PC-9 (cell line): ENCODE measurements at regions of chr20 and their contacts with region 1.

Region 1: GRCh38 chr20:1005452-1006027 is 3.4 kb upstream of the RSPO4 start:
- DNase-seq: peak in 1 of 2 experiments; percentile 15
- H3K4me3 ChIP-seq: no peak overlapping the region
- H3K27ac ChIP-seq: no peak overlapping the region
- H3K4me1 ChIP-seq: no peaks in the 10 kb centered on the region
- H3K27me3 ChIP-seq: peaks cover 40% of the 10 kb centered on the region; the same call in 1 of the 2 replicates
- CTCF ChIP-seq: no peak

Region 2: DNA sequence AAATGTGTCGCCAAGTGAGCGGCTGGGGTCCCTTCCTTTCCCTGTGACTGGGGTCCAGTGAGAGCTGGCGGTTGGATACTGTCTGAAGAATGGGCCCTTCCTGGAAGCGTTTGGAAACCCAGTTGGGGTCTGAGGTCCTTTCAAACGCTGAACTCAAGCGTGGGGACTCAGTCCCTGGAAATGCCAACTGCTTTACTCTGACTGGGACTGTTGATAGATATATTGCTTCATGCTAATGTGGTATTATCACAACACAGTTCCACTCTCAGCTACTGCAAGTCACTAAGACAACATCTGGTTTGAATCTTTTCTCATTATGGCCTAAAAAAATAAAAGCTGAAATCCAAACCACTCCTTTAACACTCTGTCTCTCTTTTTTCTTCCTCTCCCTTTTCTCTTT is 89.2 kb after region 1 on chr20:
- CTCF ChIA-PET with region 1: interaction called, 10 read pairs
- POLR2A ChIA-PET with region 1: no interaction called
- intact Hi-C with region 1: no loop called
- DNase-seq: no peak
- H3K4me3 ChIP-seq: no peak overlapping the region
- H3K27ac ChIP-seq: no peak overlapping the region
- H3K4me1 ChIP-seq: no peaks in the 10 kb centered on the region
- H3K27me3 ChIP-seq: peaks cover 21% of the 10 kb centered on the region
- CTCF ChIP-seq: no peak